Heart left ventricle (tissue), 16 donors: ENCODE measurements at regions of chr17 and their contacts with region 1.

Region 1: DNA sequence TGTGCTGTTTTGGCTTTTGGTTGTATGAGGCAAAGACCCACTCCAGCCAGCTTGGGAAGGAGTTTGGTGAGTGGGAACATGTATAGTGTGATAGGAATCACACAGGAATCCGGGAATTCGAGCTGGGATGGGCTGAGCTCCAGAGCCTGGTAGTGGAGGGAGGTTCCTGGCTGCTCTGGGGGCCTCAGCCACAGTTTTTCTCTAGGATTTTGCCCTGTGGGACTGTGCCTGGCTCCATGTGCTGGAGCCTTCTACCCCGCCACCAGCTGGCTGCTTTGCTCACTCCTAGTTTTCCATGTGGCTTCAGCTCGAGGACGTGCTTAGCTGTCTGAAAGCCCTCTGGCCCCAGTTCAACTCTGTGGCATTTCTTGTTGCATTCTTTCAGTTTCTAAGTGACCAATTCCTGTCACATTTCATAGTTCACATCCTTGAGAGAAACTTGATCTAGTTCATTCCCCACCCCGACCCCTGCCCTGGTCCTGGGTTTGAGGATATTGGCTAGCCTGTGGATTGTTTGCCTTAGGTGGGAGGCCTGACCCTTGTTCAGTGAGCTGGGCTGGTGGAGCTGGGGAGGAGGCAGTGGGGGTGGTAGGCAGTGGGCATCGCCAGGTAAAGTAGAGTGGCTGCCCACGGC is 5.0 kb downstream of the SEC14L1 start:
- DNase-seq: peak; percentile 68 to 78 (median 72)
- ATAC-seq: peak; percentile 32 to 68 (median 55)
- H3K4me3 ChIP-seq: peak overlapping the region in 10 of 12 donors; percentile 10 to 95 (median 71)
- H3K27ac ChIP-seq: peak overlapping the region; percentile 31 to 98 (median 88)
- H3K4me1 ChIP-seq: peaks cover 3 to 80% (median 38%) of the 10 kb centered on the region in 12 donors
- H3K27me3 ChIP-seq: no peaks in the 10 kb centered on the region
- CTCF ChIP-seq: peak in 9 of 12 donors; percentile 17 to 54 (median 26)
- POLR2A ChIP-seq: no peak

Region 2: GRCh38 chr17:77088455-77089123 is 57.1 kb before region 1 on chr17:
- intact Hi-C with region 1: loop called in 3 of 10 experiments (anchors 5 to 10 kb)
- DNase-seq: peak; percentile 93 to 95 (median 95)
- ATAC-seq: peak; percentile 94 to 96 (median 94)
- H3K4me3 ChIP-seq: peak overlapping the region; percentile 31 to 94 (median 74)
- H3K27ac ChIP-seq: peak overlapping the region; percentile 69 to 96 (median 89)
- H3K4me1 ChIP-seq: peaks cover 2 to 42% (median 25%) of the 10 kb centered on the region in 12 donors
- H3K27me3 ChIP-seq: peaks cover 0 to 2% (median 0%) of the 10 kb centered on the region in 9 donors
- CTCF ChIP-seq: peak; percentile 59 to 96 (median 81)
- POLR2A ChIP-seq: peak in 1 of 2 donors; percentile 65

Region 3: GRCh38 chr17:77186141-77186604 is 40.4 kb after region 1 on chr17:
- intact Hi-C with region 1: loop called in 6 of 10 experiments (anchors 5 kb)
- DNase-seq: peak in 3 of 5 donors; percentile 26 to 58 (median 44)
- ATAC-seq: peak; percentile 67 to 85 (median 76)
- H3K4me3 ChIP-seq: no peak overlapping the region
- H3K27ac ChIP-seq: peak overlapping the region in 11 of 12 donors; percentile 20 to 66 (median 44)
- H3K4me1 ChIP-seq: peaks cover 13 to 87% (median 71%) of the 10 kb centered on the region in 12 donors
- H3K27me3 ChIP-seq: no peaks in the 10 kb centered on the region
- CTCF ChIP-seq: no peak
- POLR2A ChIP-seq: no peak

Region 4: DNA sequence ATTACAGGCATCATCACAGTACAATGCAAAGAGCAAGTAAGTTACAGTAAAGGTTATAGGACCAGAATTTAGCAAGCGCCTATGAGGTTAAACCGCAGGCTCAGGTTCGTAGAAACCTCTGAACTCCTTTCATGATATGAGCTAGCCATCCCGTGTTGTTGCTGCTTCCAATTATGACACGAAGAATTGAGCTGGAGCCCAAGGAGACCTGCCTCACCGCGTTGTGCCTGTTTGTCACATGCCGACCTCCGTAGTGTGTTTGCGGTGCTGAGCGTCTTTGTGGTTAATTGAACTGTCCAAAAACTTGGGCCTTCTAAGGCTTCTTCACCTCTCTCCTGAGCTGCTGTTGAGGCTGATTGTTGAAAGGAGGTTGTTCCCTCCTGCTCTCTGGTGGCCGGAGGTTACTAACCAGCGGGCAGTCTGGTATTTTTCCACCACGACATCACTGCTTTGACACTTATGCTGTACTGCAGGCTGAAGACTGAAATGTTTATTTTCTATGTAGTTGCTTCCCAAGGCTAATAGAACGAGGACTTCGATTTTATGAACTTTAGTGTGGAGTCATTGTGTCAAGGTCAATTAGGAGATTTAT is 62.6 kb after region 1 on chr17:
- intact Hi-C with region 1: loop called in 7 of 10 experiments (anchors 5 to 10 kb)
- DNase-seq: peak in 4 of 5 donors; percentile 56 to 63 (median 58)
- ATAC-seq: peak; percentile 34 to 82 (median 72)
- H3K4me3 ChIP-seq: no peak overlapping the region
- H3K27ac ChIP-seq: peak overlapping the region; percentile 21 to 72 (median 55)
- H3K4me1 ChIP-seq: peaks cover 4 to 70% (median 35%) of the 10 kb centered on the region in 12 donors
- H3K27me3 ChIP-seq: no peaks in the 10 kb centered on the region
- CTCF ChIP-seq: peak in 10 of 12 donors; percentile 17 to 60 (median 35)
- POLR2A ChIP-seq: no peak

Region 5: GRCh38 chr17:77214743-77215142 is 69.0 kb after region 1 on chr17:
- intact Hi-C with region 1: loop called in 7 of 10 experiments (anchors 5 to 10 kb)
- DNase-seq: peak in 3 of 5 donors; percentile 57 to 69 (median 58)
- ATAC-seq: peak in 3 of 4 donors; percentile 69 to 75 (median 72)
- H3K4me3 ChIP-seq: no peak overlapping the region
- H3K27ac ChIP-seq: peak overlapping the region in 1 of 12 donors; percentile 23
- H3K4me1 ChIP-seq: peaks cover 0 to 44% (median 11%) of the 10 kb centered on the region in 12 donors
- H3K27me3 ChIP-seq: no peaks in the 10 kb centered on the region
- CTCF ChIP-seq: peak; percentile 30 to 67 (median 48)
- POLR2A ChIP-seq: no peak